ENCODE measurements at regions of chr16 and their contacts with region 1.

Region 1: DNA sequence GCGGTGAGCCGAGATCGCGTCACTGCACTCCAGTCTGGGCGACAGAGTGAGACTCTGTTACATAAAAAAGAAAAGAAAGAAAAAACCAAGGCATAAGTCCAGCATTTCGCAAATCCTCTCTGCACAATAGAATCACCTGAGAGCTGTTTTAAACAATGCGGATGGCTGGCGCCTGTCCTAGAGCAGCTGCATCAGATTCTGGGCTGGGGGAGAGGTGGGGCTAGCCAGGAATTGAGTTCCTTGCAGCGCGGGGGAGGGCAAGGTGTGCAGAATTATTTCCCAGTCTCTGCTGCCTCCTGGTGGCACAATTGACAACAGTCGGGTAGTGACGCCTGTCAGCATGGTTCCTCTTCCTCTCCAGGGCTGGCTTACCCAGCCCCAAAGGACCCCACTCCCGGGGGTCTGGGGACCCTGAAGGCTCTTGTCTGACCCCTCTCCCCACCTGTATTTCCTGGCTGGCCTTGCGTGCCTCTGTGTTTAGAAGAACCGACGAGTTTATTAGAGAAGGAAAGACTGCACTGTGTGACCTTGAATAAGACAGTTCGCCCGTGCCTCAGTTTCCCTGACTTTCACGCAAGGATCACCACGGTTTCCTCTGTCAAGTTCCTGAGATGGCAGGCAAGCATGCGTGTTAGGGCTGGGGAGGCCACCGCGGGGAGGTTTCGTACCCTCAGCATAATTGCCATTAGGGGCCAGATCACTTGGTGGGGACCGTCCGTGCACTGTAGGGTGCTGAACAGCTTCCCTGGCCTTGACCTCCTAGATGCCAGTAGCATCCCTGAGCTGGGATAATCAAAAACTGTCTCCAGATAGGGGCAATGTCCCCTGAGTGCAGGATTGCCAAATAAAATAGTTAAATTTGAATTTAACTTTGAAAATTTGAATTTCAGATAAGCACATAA is 41.0 kb upstream of the PLCG2 start:
- DNase-seq: peak; percentile 81
- H3K4me3 ChIP-seq: peak overlapping the region in 1 of 3 experiments; percentile 40
- H3K27ac ChIP-seq: no peak overlapping the region
- H3K4me1 ChIP-seq: peaks cover 4% of the 10 kb centered on the region
- H3K27me3 ChIP-seq: no peaks in the 10 kb centered on the region
- CTCF ChIP-seq: peak; percentile 77 to 83
- POLR2A ChIP-seq: no peak

Region 2: DNA sequence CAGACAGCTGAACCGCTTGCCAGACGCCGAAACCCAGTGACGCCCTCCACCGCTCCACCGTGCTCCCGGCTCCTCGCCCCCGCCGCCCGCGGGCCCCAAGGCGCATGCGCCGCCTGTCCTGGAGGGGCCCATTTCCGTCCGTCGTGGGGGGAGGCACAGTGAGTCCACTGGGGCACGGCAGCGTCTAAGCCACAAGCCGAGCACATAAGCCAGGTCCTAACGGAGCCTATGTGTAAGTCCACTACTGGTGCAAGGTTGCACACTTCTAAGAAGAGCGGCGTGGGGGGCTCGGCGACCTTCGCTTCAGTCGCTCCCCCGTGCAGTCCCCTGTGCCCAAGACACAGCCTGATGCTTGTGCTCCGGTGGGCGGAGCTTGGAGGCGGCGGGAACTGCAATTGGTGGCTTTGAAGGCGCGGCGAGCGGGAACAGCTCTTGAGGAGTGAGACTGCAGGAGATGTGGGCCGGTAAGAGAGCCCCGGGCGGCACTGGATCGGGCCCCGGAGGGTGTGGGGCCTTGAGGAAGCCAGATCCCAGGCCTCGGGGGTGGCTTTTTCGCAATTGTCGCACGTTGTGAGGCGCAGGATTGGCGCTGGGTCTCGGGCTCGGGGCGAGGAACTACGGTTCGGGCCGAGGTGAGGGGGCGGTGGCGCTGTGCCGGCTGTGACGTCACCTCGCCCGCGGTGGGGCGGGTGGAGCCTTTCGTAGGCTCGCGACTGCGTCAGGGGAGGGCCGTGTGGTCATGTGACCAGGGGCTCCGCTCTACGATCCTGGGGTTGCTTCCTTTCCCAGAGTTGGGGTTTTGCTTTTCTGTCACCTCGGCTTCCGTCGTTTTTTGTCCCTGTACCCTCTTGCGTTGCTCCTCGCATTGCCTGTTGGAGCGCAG is 731.1 kb before region 1 on chr16 and contains the starts of genes CENPN and CMC2:
- CTCF ChIA-PET with region 1: interaction called, 4 read pairs
- POLR2A ChIA-PET with region 1: no interaction called
- dilution Hi-C with region 1: no loop called
- intact Hi-C with region 1: loop called (anchors 1 kb)
- DNase-seq: peak; percentile 99
- H3K4me3 ChIP-seq: peak within 1 kb of the TSS; percentile 72 to 87 (median 83)
- H3K27ac ChIP-seq: peak within 1 kb of the TSS; percentile 80
- H3K4me1 ChIP-seq: peaks cover 19% of the 10 kb centered on the region
- H3K27me3 ChIP-seq: no peaks in the 10 kb centered on the region
- CTCF ChIP-seq: peak in 1 of 2 donors; percentile 1
- POLR2A ChIP-seq: peak; percentile 84
- total RNA-seq, gene CENPN: 52.4 and 53.4 TPM in 2 replicates
- total RNA-seq, gene CMC2: 96.6 and 97.8 TPM in 2 replicates

Region 3: GRCh38 chr16:81204798-81205680 is 533.1 kb before region 1 on chr16:
- CTCF ChIA-PET with region 1: interaction called, 18 read pairs
- POLR2A ChIA-PET with region 1: no interaction called
- dilution Hi-C with region 1: no loop called
- intact Hi-C with region 1: loop called (anchors 1 kb)
- DNase-seq: peak; percentile 73
- H3K4me3 ChIP-seq: no peak overlapping the region
- H3K27ac ChIP-seq: no peak overlapping the region
- H3K4me1 ChIP-seq: no peaks in the 10 kb centered on the region
- H3K27me3 ChIP-seq: peaks cover 0 to 3% of the 10 kb centered on the region in 2 experiments
- CTCF ChIP-seq: peak; percentile 45 to 69
- POLR2A ChIP-seq: no peak

Region 4: GRCh38 chr16:81324808-81325207 is 413.3 kb before region 1 on chr16:
- CTCF ChIA-PET with region 1: no interaction called
- POLR2A ChIA-PET with region 1: no interaction called
- dilution Hi-C with region 1: no loop called
- intact Hi-C with region 1: no loop called
- DNase-seq: no peak
- H3K4me3 ChIP-seq: no peak overlapping the region
- H3K27ac ChIP-seq: no peak overlapping the region
- H3K4me1 ChIP-seq: no peaks in the 10 kb centered on the region
- H3K27me3 ChIP-seq: no peaks in the 10 kb centered on the region
- CTCF ChIP-seq: no peak
- POLR2A ChIP-seq: no peak

Region 5: GRCh38 chr16:81376880-81377279 is 361.3 kb before region 1 on chr16:
- CTCF ChIA-PET with region 1: interaction called, 4 read pairs
- POLR2A ChIA-PET with region 1: no interaction called
- dilution Hi-C with region 1: loop called (anchors 25 kb)
- intact Hi-C with region 1: no loop called
- DNase-seq: peak; percentile 67
- H3K4me3 ChIP-seq: no peak overlapping the region
- H3K27ac ChIP-seq: no peak overlapping the region
- H3K4me1 ChIP-seq: peaks cover 18% of the 10 kb centered on the region
- H3K27me3 ChIP-seq: no peaks in the 10 kb centered on the region
- CTCF ChIP-seq: no peak
- POLR2A ChIP-seq: no peak

Measured in endothelial cell of umbilical vein (primary cell).